ENCODE measurements at regions of chr9 and their contacts with region 1.

Region 1: DNA sequence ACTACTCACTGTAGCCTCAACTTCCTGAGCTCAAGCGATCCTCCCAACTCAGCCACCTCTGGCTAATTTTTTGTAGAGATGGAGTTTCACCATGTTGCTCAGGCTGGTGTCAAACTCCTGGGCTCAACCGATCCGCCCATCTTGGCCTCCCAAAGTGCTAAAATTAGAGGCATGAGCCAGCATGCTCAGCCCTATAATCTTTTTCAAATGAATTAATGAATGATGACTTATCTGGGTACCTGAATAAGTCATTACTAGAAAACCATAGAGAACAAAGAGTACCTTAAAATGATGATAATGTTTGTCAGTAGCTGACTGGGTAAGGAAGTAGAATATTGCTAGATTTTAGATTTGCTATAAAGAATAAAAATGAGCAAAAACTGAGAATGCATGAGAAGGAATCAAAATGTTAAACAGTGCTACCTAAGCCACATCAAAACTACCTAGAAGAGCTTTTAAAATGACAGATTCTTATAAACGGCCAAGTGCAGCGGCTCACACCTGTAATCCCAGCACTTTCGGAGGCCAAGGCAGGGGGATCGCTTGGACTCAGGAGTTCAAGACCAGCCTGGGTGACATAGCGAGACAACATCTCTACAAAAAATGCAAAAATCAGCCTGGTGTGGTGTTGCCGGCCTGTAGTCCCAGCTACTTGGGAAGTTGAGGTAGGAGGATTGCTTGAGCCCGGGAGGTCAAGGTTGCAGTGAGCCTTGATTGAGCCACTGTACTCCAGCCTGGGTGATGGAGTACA is 13.6 kb downstream of the FNBP1 start:
- DNase-seq: peak; percentile 75
- H3K4me3 Mint-ChIP-seq: peak overlapping the region; percentile 71
- H3K27ac Mint-ChIP-seq: peak overlapping the region; percentile 92
- H3K4me1 Mint-ChIP-seq: peaks cover 74% of the 10 kb centered on the region
- H3K27me3 Mint-ChIP-seq: no peaks in the 10 kb centered on the region

Region 2: DNA sequence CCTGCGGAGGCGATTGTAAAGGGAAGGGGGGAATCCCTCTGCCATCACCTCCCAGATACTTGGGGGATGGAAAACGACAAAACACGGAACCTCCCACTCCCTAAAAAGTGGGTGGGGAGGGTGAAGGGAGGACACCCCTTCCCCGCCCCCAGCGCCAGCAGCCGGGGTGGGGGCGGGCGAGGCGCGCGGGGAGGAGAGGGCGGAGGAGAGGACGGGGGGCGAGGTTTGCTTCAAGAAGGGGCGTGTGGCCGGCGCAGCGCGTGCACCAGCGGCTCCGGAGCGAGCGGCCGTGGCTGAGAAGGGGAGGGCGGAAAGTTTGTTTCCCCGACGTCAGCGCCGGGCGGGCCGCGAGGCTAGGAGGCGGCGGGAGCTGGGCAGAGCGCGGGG is 364.0 kb before region 1 on chr9 and contains the start of gene PRRX2:
- intact Hi-C with region 1: no loop called
- DNase-seq: peak; percentile 86
- H3K4me3 Mint-ChIP-seq: peak within 1 kb of the TSS; percentile 79
- H3K27ac Mint-ChIP-seq: no peak within 1 kb of the TSS
- H3K4me1 Mint-ChIP-seq: peaks cover 7% of the 10 kb centered on the region
- H3K27me3 Mint-ChIP-seq: peaks cover 23% of the 10 kb centered on the region
- total RNA-seq, gene PRRX2: 3.4 and 3.8 TPM in 2 replicates

Region 3: DNA sequence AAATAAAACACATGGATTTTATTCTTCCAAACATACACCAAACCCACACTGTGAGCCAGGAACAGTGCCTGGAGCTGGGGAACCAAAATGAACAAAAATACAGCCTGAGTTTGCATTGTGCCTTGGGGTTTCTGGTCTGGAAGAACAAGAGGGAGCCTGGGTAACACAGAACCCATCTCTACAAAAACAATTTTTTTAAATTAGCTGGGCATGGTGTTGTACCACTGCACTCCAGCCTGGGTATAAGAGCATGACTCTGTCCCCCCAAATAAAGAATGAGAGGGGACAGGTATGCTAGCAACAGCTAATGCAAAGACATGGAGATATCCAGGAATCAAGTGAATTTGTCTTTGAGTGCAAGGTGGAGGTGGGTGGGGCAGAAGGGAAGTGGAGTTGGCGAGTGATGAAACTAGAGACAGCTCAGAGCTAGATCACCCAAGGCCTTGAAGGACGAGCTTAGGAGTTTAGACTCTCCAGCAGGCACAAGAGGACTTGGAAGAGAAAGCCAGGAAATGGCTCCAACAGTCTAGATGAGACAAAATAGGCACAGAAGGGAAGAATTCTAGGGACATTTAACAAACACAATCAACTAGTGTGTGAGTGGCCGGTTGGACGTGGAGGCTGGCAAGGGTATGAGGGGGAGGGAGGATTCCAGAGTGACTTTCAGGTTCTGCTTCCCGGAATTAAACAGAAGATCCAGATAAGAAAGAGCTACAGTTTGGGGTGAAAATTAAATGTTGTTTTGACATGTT is 33.8 kb before region 1 on chr9:
- intact Hi-C with region 1: loop called (anchors 1 kb)
- DNase-seq: peak; percentile 77
- H3K4me3 Mint-ChIP-seq: peak overlapping the region; percentile 75
- H3K27ac Mint-ChIP-seq: peak overlapping the region; percentile 95
- H3K4me1 Mint-ChIP-seq: peaks cover 56% of the 10 kb centered on the region
- H3K27me3 Mint-ChIP-seq: no peaks in the 10 kb centered on the region